Activated CD8-positive, alpha-beta T cell treated with anti-CD3 and anti-CD28 coated beads, Interleukin-2, amount 10 ng/mL, durations not matched to agents 7 days and 5 days (primary cell): ENCODE measurements at regions of chr1 and their contacts with region 1.

Region 1: GRCh38 chr1:156892190-156893047 is 1.1 kb upstream of the PEAR1 start:
- DNase-seq: peak; percentile 92
- ATAC-seq: peak; percentile 97
- H3K4me3 Mint-ChIP-seq: peak overlapping the region; percentile 67
- H3K27ac Mint-ChIP-seq: no peak overlapping the region
- H3K4me1 Mint-ChIP-seq: peaks cover 29% of the 10 kb centered on the region
- H3K27me3 Mint-ChIP-seq: peaks cover 50% of the 10 kb centered on the region

Region 2: GRCh38 chr1:156689035-156689952 is 203.1 kb before region 1 on chr1:
- CTCF ChIA-PET with region 1: interaction called, 54 read pairs
- POLR2A ChIA-PET with region 1: no interaction called
- DNase-seq: peak; percentile 83
- ATAC-seq: peak; percentile 97
- H3K4me3 Mint-ChIP-seq: no peak overlapping the region
- H3K27ac Mint-ChIP-seq: no peak overlapping the region
- H3K4me1 Mint-ChIP-seq: peaks cover 36% of the 10 kb centered on the region
- H3K27me3 Mint-ChIP-seq: peaks cover 55% of the 10 kb centered on the region

Region 3: DNA sequence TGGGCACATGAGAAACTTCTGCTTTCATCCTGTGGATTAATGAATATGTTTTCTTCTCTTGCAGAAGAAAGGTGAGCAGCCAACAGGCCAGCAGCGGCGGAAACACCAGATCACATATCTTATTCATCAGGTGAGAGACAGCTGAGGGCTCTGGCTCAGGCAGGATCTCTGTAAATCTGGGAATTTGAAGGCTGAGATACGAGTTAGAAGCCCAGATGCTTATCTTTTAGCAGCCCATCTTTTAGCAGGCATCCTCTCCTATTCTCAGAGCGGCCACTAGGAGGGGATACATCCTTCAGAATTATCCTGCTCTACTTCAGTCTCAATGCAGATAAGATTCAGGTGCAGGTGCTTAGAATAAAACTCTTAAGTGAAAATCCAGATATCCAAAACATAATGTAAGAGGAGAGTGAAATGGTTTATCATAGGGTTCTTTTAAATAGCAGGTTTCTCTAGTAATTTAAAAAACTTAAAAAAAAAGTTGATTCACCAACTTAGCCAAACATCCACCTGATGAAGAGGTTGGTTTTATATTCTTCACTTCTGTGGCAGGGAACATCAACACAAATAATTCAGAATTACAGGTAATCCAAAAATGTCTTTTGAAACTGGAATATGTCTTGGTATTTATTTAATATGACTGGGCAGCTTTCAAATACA is 95.1 kb before region 1 on chr1:
- CTCF ChIA-PET with region 1: interaction called, 59 read pairs
- POLR2A ChIA-PET with region 1: interaction called, 3 read pairs
- DNase-seq: peak; percentile 81
- ATAC-seq: peak; percentile 76
- H3K4me3 Mint-ChIP-seq: no peak overlapping the region
- H3K27ac Mint-ChIP-seq: no peak overlapping the region
- H3K4me1 Mint-ChIP-seq: peaks cover 24% of the 10 kb centered on the region
- H3K27me3 Mint-ChIP-seq: no peaks in the 10 kb centered on the region

Region 4: GRCh38 chr1:156813750-156814570 is 78.5 kb before region 1 on chr1:
- CTCF ChIA-PET with region 1: interaction called, 13 read pairs
- POLR2A ChIA-PET with region 1: no interaction called
- DNase-seq: peak; percentile 83
- ATAC-seq: peak; percentile 55
- H3K4me3 Mint-ChIP-seq: peak overlapping the region; percentile 92
- H3K27ac Mint-ChIP-seq: peak overlapping the region; percentile 100
- H3K4me1 Mint-ChIP-seq: peaks cover 70% of the 10 kb centered on the region
- H3K27me3 Mint-ChIP-seq: no peaks in the 10 kb centered on the region

Region 5: GRCh38 chr1:156848461-156849150 is 43.8 kb before region 1 on chr1:
- CTCF ChIA-PET with region 1: interaction called, 23 read pairs
- POLR2A ChIA-PET with region 1: no interaction called
- DNase-seq: peak; percentile 93
- ATAC-seq: peak; percentile 89
- H3K4me3 Mint-ChIP-seq: peak overlapping the region; percentile 56
- H3K27ac Mint-ChIP-seq: peak overlapping the region; percentile 86
- H3K4me1 Mint-ChIP-seq: peaks cover 49% of the 10 kb centered on the region
- H3K27me3 Mint-ChIP-seq: peaks cover 30% of the 10 kb centered on the region

Region 6: GRCh38 chr1:156876281-156876680 is 16.1 kb before region 1 on chr1:
- CTCF ChIA-PET with region 1: interaction called, 22 read pairs
- POLR2A ChIA-PET with region 1: interaction called, 4 read pairs
- DNase-seq: no peak
- ATAC-seq: no peak
- H3K4me3 Mint-ChIP-seq: no peak overlapping the region
- H3K27ac Mint-ChIP-seq: no peak overlapping the region
- H3K4me1 Mint-ChIP-seq: no peaks in the 10 kb centered on the region
- H3K27me3 Mint-ChIP-seq: peaks cover 7% of the 10 kb centered on the region

Region 7: DNA sequence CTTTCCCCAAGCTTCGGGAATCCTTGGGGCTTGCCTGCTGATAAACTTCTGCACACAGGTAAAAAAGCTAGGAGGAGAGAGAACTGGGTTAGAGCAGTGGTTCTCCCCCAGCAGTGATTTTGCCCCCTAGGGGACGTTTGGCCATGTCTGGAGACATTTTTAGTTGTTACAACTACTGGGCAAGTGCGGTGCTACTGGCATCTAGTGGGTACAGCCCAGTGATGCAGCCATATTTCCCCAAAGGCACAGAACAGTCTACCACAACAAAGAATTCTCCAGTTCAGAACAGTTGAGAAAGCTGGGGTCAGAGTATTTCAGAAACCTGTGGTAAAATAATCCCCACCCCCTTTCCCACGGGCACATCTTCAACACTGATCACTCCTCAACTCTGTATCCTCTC is 69.3 kb after region 1 on chr1:
- CTCF ChIA-PET with region 1: interaction called, 12 read pairs
- POLR2A ChIA-PET with region 1: no interaction called
- DNase-seq: peak; percentile 69
- ATAC-seq: peak; percentile 72
- H3K4me3 Mint-ChIP-seq: no peak overlapping the region
- H3K27ac Mint-ChIP-seq: no peak overlapping the region
- H3K4me1 Mint-ChIP-seq: peaks cover 39% of the 10 kb centered on the region
- H3K27me3 Mint-ChIP-seq: peaks cover 14% of the 10 kb centered on the region